Stomach (tissue), 19 donors: ENCODE measurements at regions of chr3 and their contacts with region 1.

Region 1: DNA sequence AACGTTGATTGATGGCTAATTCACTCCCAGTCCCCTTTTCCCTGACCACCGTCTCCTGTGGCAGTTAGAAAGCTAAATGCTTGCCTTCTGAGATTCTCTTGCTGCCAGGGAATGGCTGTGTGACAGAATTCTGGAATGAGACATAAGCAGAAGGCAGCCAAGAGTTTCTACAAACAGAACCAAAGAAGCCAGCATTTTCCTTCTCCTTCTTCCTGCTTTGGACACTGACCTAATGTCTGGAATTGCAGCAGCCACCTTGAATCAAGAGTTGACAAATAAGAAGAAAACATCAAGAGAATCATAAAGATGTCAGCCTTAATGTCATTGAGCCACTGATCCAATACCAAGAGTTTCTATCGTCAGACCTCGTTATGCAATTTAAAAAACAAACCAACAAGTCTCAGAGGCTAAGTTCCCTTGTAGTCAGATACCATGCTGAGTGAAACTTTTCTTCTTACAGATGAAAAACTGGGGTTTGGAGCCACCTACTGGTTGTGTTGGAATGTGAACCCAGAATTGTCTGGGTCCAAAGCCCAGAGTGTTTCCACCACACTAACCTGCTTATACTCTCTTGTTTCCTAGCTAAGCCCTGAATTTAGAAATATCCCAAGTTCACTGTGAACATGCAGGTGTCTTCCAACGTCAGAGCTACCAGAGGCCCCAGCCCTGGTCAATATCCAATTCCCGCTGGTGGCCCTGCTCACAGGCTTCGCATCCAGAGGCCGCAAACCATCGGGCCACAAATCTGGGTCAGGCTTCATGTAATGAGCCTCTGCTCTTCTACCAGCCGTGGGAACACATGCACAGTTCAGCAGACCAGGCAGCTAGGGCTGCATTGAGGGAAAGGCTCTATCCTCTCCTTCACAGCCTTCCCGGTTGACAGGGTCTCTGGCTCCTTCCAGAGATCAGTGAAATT is 42.5 kb downstream of the MCF2L2 start:
- DNase-seq: peak; percentile 64 to 90
- H3K4me3 ChIP-seq: no peak overlapping the region
- H3K27ac ChIP-seq: no peak overlapping the region
- H3K4me1 ChIP-seq: peaks cover 0 to 8% (median 6%) of the 10 kb centered on the region in 4 donors
- H3K27me3 ChIP-seq: no peaks in the 10 kb centered on the region
- CTCF ChIP-seq: peak in 5 of 7 experiments; percentile 43 to 76 (median 59)
- EP300 ChIP-seq: no peak
- POLR2A ChIP-seq: no peak

Region 2: GRCh38 chr3:183122257-183122932 is 263.6 kb before region 1 on chr3:
- intact Hi-C with region 1: loop called (anchors 10 kb)
- DNase-seq: peak in 1 of 2 donors; percentile 79
- H3K4me3 ChIP-seq: no peak overlapping the region
- H3K27ac ChIP-seq: peak overlapping the region in 2 of 5 donors; percentile 17 to 39
- H3K4me1 ChIP-seq: peaks cover 4 to 22% (median 7%) of the 10 kb centered on the region in 4 donors
- H3K27me3 ChIP-seq: peaks cover 0 to 16% (median 0%) of the 10 kb centered on the region in 3 donors
- CTCF ChIP-seq: peak in 5 of 7 experiments; percentile 67 to 83 (median 80)
- EP300 ChIP-seq: no peak
- POLR2A ChIP-seq: no peak

Region 3: GRCh38 chr3:183188895-183189462 is 197.0 kb before region 1 on chr3:
- intact Hi-C with region 1: loop called (anchors 5 kb)
- DNase-seq: peak; percentile 47 to 59
- H3K4me3 ChIP-seq: no peak overlapping the region
- H3K27ac ChIP-seq: no peak overlapping the region
- H3K4me1 ChIP-seq: peaks cover 0 to 13% (median 6%) of the 10 kb centered on the region in 4 donors
- H3K27me3 ChIP-seq: no peaks in the 10 kb centered on the region
- CTCF ChIP-seq: peak in 1 of 7 experiments; percentile 24
- EP300 ChIP-seq: no peak
- POLR2A ChIP-seq: no peak

Region 4: GRCh38 chr3:184040010-184040409 is 654.1 kb after region 1 on chr3:
- intact Hi-C with region 1: no loop called
- DNase-seq: peak; percentile 15 to 29
- H3K4me3 ChIP-seq: no peak overlapping the region
- H3K27ac ChIP-seq: peak overlapping the region in 1 of 5 donors; percentile 37
- H3K4me1 ChIP-seq: peaks cover 0 to 4% (median 0%) of the 10 kb centered on the region in 4 donors
- H3K27me3 ChIP-seq: no peaks in the 10 kb centered on the region
- CTCF ChIP-seq: peak in 4 of 7 experiments; percentile 8 to 47 (median 28)
- EP300 ChIP-seq: no peak
- POLR2A ChIP-seq: no peak